ENCODE measurements at regions of chr6 and their contacts with region 1.

Region 1: DNA sequence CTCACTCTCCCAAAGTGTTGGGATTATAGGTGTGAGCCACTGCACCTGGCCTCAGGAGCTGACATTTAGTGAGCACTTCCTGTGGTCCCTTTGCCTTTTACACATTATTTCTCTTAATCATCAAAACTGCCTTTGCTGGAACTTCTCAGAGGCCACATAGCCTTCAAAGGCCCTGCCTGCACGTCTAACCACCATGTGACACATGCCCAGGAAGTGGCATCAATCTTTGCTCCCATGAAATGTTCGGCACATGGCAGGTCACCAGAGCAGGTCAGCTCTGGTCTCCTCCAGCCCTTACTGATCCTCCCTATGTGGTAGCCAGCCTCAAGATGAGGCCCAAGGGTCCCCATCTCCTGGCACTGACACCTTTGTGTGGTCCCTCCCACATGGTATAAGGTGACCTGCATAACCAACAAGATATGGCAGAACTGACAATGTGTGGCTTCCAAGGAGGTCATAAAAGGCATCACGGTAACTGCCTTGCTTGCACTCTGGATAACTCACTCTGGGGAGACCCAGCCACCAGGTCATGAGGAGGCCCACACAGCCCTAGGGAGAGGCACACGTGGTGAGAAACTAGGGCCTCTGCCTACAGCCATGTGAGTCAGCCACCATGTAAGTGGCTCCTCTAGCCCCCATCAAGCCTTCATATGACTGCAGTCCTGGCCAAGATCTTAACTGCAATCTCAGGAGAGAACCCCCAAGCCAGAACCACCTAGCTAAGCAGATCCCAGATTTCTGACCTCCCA is 28.8 kb upstream of the HMGA1 start:
- DNase-seq: peak in 1 of 4 experiments; percentile 23
- ATAC-seq: peak; percentile 63
- H3K4me3 ChIP-seq: no peak overlapping the region
- H3K27ac ChIP-seq: no peak overlapping the region
- H3K4me1 ChIP-seq: peaks cover 0 to 4% of the 10 kb centered on the region in 2 experiments; a peak in 3 of 5 replicates
- H3K27me3 ChIP-seq: no peaks in the 10 kb centered on the region
- CTCF ChIP-seq: no peak
- EP300 ChIP-seq: no peak
- POLR2A ChIP-seq: no peak
- RAD21 ChIP-seq: no peak

Region 2: GRCh38 chr6:34223956-34224940 is 16.4 kb after region 1 on chr6:
- CTCF ChIA-PET with region 1: no interaction called
- POLR2A ChIA-PET with region 1: interaction called, 16 read pairs
- in situ Hi-C with region 1: no loop called
- intact Hi-C with region 1: no loop called
- DNase-seq: peak; percentile 97 to 99 (median 98)
- ATAC-seq: peak; percentile 95
- H3K4me3 ChIP-seq: peak overlapping the region; percentile 43
- H3K27ac ChIP-seq: peak overlapping the region; percentile 93
- H3K4me1 ChIP-seq: peaks cover 43 to 45% of the 10 kb centered on the region in 2 experiments
- H3K27me3 ChIP-seq: no peaks in the 10 kb centered on the region
- CTCF ChIP-seq: no peak
- EP300 ChIP-seq: peak; percentile 46; the same call in 1 of the 2 replicates
- POLR2A ChIP-seq: peak; percentile 86
- RAD21 ChIP-seq: no peak

Region 3: DNA sequence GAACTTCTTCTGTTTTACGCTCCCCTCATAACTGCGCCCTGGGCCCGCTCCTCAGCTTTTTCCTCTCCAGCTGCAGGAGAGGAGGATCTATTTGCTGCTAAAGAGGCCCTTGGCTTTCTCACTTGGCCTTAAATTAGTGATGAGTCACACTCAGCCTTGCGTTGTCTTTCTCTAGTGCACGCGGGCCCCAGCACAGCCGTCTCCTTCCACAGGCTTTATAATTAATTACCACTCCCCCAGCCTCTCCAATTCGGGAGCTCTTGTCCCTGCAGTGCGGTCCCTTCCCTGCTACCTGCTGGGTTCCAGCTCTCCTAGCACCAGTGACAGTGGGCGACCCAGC is 283.2 kb after region 1 on chr6:
- CTCF ChIA-PET with region 1: no interaction called
- POLR2A ChIA-PET with region 1: no interaction called
- in situ Hi-C with region 1: no loop called
- intact Hi-C with region 1: no loop called
- DNase-seq: peak; percentile 54 to 73 (median 62)
- ATAC-seq: peak; percentile 81
- H3K4me3 ChIP-seq: no peak overlapping the region
- H3K27ac ChIP-seq: peak overlapping the region; percentile 24; the same call in 1 of the 3 replicates
- H3K4me1 ChIP-seq: peaks cover 11 to 12% of the 10 kb centered on the region in 2 experiments; a peak in 4 of 5 replicates
- H3K27me3 ChIP-seq: no peaks in the 10 kb centered on the region
- CTCF ChIP-seq: no peak
- EP300 ChIP-seq: no peak
- POLR2A ChIP-seq: no peak
- RAD21 ChIP-seq: no peak